ENCODE measurements at regions of chr10 and their contacts with region 1.

Region 1: GRCh38 chr10:117174439-117175214 is 22.7 kb upstream of the KCNK18 start:
- DNase-seq: peak; percentile 82
- ATAC-seq: peak; percentile 93
- H3K4me3 ChIP-seq: no peak overlapping the region
- H3K27ac ChIP-seq: no peak overlapping the region
- H3K4me1 ChIP-seq: peaks cover 0 to 21% of the 10 kb centered on the region in 2 experiments; a peak in 3 of 4 replicates
- H3K27me3 ChIP-seq: peaks cover 13% of the 10 kb centered on the region; the same call in 1 of the 2 replicates
- CTCF ChIP-seq: peak; percentile 94 to 99 (median 97)
- POLR2A ChIP-seq: no peak
- RAD21 ChIP-seq: peak; percentile 98

Region 2: DNA sequence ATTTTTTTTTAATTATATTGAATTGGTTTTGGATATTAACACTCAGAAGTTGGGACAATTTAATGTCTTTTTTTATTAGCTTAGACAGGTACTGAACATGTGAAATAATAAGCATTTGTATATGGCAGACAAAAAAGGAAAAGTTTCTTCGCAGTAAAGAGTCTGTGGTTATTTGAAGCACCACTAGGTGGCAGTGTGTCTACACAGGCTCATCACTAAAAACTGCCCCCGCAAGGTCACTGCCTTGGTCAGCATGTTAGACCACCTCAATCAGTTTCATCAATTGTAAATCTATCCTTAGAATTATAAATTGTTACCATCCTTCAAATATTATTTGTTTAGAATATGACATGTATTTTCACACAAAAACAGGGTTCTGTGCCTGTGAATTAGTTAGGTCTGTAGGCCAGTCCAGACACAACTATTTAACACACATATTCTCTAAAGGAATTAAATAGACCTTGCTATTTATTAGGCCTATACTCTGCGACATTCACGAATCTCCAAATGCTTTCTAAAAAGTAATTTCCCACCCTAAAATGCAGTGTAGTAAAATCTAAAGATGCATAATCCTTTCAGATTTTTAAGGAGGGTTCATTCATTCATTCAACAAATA is 730.0 kb before region 1 on chr10:
- CTCF ChIA-PET with region 1: no interaction called
- POLR2A ChIA-PET with region 1: no interaction called
- RAD21 ChIA-PET with region 1: no interaction called
- intact Hi-C with region 1: loop called (anchors 5 kb)
- DNase-seq: peak; percentile 52
- ATAC-seq: peak; percentile 90
- H3K4me3 ChIP-seq: no peak overlapping the region
- H3K27ac ChIP-seq: no peak overlapping the region
- H3K4me1 ChIP-seq: no peaks in the 10 kb centered on the region
- H3K27me3 ChIP-seq: peaks cover 17% of the 10 kb centered on the region
- CTCF ChIP-seq: peak; percentile 80 to 98 (median 94)
- POLR2A ChIP-seq: no peak
- RAD21 ChIP-seq: peak; percentile 78

Region 3: DNA sequence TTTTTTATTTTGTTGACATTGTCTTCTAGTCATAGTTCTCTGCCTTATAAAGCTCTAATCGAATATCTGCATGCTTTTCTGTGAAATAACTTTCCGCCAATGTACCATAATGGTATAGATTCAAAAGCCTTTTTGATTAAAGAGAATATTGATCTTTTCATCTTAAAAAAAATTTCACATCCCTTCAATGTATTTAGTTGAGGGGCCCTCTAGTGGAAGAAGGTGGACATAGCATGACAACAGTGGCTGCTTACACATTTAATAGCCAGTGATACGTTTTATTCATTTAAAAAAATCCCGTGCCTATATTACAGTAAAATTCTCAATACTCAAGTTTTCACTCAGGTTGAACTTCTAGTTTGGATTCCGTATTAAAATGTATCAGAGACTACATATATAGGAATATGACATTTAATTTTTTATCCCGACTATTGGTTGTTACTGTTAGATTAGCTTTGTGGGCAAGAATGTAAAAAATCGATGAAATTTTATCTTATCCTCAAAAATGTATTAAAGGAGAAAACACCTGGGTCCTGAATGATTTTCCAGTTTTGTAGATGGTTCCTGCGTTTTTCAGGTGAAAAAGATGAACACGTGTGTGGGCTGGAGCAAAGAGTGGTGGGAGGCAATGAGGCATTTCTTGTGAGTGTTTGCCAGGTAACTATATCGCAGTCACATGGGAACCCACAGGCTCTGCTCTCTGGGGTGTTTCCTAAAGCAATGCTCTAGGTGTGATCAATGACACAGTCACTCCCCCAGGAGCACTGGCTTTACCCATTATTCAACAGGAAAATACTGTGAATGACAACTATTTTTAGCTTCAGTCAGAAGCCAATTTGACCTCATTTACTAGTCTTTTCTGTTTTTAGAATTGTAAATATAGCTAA is 653.0 kb before region 1 on chr10:
- CTCF ChIA-PET with region 1: interaction called, 12 read pairs
- POLR2A ChIA-PET with region 1: no interaction called
- RAD21 ChIA-PET with region 1: no interaction called
- intact Hi-C with region 1: no loop called
- DNase-seq: peak; percentile 62
- ATAC-seq: peak; percentile 84
- H3K4me3 ChIP-seq: no peak overlapping the region
- H3K27ac ChIP-seq: no peak overlapping the region
- H3K4me1 ChIP-seq: no peaks in the 10 kb centered on the region
- H3K27me3 ChIP-seq: peaks cover 30% of the 10 kb centered on the region
- CTCF ChIP-seq: peak; percentile 72 to 96 (median 84)
- POLR2A ChIP-seq: no peak
- RAD21 ChIP-seq: peak; percentile 67

Region 4: GRCh38 chr10:116687633-116688032 is 487.0 kb before region 1 on chr10:
- CTCF ChIA-PET with region 1: interaction called, 8 read pairs
- POLR2A ChIA-PET with region 1: no interaction called
- RAD21 ChIA-PET with region 1: no interaction called
- intact Hi-C with region 1: loop called (anchors 1 kb)
- DNase-seq: no peak
- ATAC-seq: no peak
- H3K4me3 ChIP-seq: no peak overlapping the region
- H3K27ac ChIP-seq: no peak overlapping the region
- H3K4me1 ChIP-seq: no peaks in the 10 kb centered on the region
- H3K27me3 ChIP-seq: no peaks in the 10 kb centered on the region
- CTCF ChIP-seq: no peak
- POLR2A ChIP-seq: no peak
- RAD21 ChIP-seq: no peak

Region 5: GRCh38 chr10:116796910-116797513 is 377.6 kb before region 1 on chr10:
- CTCF ChIA-PET with region 1: interaction called, 629 read pairs
- POLR2A ChIA-PET with region 1: interaction called, 13 read pairs
- RAD21 ChIA-PET with region 1: interaction called, 15 to 33 read pairs
- intact Hi-C with region 1: loop called (anchors 1 kb)
- DNase-seq: peak; percentile 65
- ATAC-seq: peak; percentile 98
- H3K4me3 ChIP-seq: no peak overlapping the region
- H3K27ac ChIP-seq: no peak overlapping the region
- H3K4me1 ChIP-seq: no peaks in the 10 kb centered on the region
- H3K27me3 ChIP-seq: no peaks in the 10 kb centered on the region
- CTCF ChIP-seq: peak; percentile 98 to 100 (median 100)
- POLR2A ChIP-seq: no peak
- RAD21 ChIP-seq: peak; percentile 100

Region 6: DNA sequence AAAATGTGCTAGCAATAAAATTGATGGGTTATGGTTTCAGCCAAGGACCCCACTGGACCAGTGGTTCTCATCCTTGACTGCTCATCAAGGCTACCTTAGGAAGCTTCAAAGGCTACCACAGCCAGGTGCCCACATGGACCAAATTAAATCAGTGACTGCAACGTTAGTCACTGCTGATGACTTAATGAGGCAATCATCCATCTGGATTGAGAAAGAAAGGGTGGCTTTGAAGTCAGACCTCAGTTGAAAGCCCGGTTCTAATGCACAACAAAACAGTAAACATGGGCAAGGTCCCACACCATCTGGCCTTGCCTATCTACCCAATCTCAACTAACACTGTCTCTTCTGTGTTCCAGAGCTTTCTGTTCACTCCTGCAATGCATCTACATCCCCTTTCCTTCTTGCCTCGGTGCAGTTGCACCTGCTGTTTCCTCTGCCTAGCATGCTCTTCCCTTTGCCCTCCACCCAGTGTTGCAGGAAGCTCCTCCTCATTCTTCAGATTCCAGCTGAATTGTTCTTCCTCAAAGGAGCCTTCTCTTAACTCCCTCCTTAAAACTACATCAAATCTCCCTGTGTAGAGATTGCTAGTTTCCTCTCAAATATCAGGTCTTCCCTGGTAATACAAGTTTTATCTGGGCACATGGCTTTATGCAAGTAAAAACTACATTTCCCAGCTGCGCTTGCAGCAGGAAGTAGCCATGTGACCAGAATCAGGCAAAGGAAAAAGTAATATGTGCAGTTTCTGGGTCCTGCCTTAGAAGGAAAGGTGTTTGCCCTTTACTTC is 12.4 kb after region 1 on chr10:
- CTCF ChIA-PET with region 1: interaction called, 64 read pairs
- POLR2A ChIA-PET with region 1: interaction called, 4 read pairs
- RAD21 ChIA-PET with region 1: no interaction called
- intact Hi-C with region 1: no loop called
- DNase-seq: peak; percentile 80
- ATAC-seq: peak; percentile 75
- H3K4me3 ChIP-seq: no peak overlapping the region; a peak in 1 of 4 replicates
- H3K27ac ChIP-seq: peak overlapping the region; percentile 0; the same call in 1 of the 2 replicates
- H3K4me1 ChIP-seq: peaks cover 14 to 34% of the 10 kb centered on the region in 2 experiments
- H3K27me3 ChIP-seq: no peaks in the 10 kb centered on the region
- CTCF ChIP-seq: no peak
- POLR2A ChIP-seq: no peak
- RAD21 ChIP-seq: no peak

Region 7: GRCh38 chr10:117647306-117647705 is 472.7 kb after region 1 on chr10:
- CTCF ChIA-PET with region 1: no interaction called
- POLR2A ChIA-PET with region 1: no interaction called
- RAD21 ChIA-PET with region 1: no interaction called
- intact Hi-C with region 1: no loop called
- DNase-seq: no peak
- ATAC-seq: no peak
- H3K4me3 ChIP-seq: no peak overlapping the region
- H3K27ac ChIP-seq: no peak overlapping the region
- H3K4me1 ChIP-seq: no peaks in the 10 kb centered on the region; a peak in 1 of 4 replicates
- H3K27me3 ChIP-seq: peaks cover 22% of the 10 kb centered on the region; the same call in 1 of the 2 replicates
- CTCF ChIP-seq: no peak
- POLR2A ChIP-seq: no peak
- RAD21 ChIP-seq: no peak